H1 (cell line): ENCODE measurements at regions of chr19 and their contacts with region 1.

Region 1: DNA sequence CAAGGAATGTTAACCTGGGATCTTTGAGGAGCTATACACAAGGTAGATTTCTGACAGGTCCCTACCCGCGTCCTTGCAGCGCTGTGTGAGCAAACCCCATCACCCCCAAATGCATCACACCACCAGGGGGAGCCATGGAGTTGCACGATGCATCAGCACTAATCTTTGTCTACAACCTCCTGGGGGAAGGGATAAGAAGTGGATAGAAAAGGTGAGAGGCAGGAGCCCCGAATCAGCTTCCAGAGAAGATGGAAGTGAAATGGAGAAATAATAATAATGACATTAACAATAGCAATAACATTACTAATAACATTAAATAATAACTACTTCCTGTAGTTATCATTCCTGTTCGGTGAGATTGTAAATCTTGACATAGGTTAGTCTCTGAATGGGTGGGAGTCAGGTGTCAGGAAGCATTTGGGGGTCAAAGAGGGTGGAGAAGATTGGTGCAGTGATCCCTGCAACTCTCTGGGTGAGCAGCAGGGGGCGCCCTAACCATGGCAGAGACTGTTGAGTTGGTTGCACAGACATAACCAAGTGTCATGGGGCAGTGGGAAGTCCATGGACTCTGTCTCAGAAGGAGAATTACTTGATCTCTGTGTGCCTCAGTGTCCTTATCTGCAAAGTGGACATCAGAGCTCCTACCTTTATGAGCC is 16.5 kb downstream of the SIGLEC7 start:
- DNase-seq: peak; percentile 56 to 95
- H3K4me3 ChIP-seq: no peak overlapping the region
- H3K27ac ChIP-seq: no peak overlapping the region
- H3K4me1 ChIP-seq: no peaks in the 10 kb centered on the region
- H3K27me3 ChIP-seq: 0 out of 7 replicates have a peak, but pooled peaks cover 0 to 3% (median 0%) of the 10 kb centered on the region in 4 experiments
- CTCF ChIP-seq: peak; percentile 84 to 91 (median 89)
- EP300 ChIP-seq: no peak
- POLR2A ChIP-seq: no peak
- RAD21 ChIP-seq: peak; percentile 87 to 88

Region 2: GRCh38 chr19:51135986-51136762 is 22.4 kb before region 1 on chr19:
- CTCF ChIA-PET with region 1: interaction called, 21 read pairs
- POLR2A ChIA-PET with region 1: no interaction called
- DNase-seq: no peak
- H3K4me3 ChIP-seq: no peak overlapping the region
- H3K27ac ChIP-seq: no peak overlapping the region
- H3K4me1 ChIP-seq: peaks cover 4 to 6% (median 5%) of the 10 kb centered on the region in 4 experiments; a peak in 5 of 7 replicates
- H3K27me3 ChIP-seq: no peaks in the 10 kb centered on the region
- CTCF ChIP-seq: no peak
- EP300 ChIP-seq: no peak
- POLR2A ChIP-seq: no peak
- RAD21 ChIP-seq: no peak

Region 3: GRCh38 chr19:51147663-51148062 is 10.9 kb before region 1 on chr19:
- CTCF ChIA-PET with region 1: interaction called, 62 read pairs
- POLR2A ChIA-PET with region 1: no interaction called
- DNase-seq: no peak
- H3K4me3 ChIP-seq: no peak overlapping the region
- H3K27ac ChIP-seq: no peak overlapping the region
- H3K4me1 ChIP-seq: no peaks in the 10 kb centered on the region; a peak in 1 of 7 replicates
- H3K27me3 ChIP-seq: no peaks in the 10 kb centered on the region
- CTCF ChIP-seq: no peak
- EP300 ChIP-seq: no peak
- POLR2A ChIP-seq: no peak
- RAD21 ChIP-seq: no peak

Region 4: GRCh38 chr19:51179256-51179655 is 20.7 kb after region 1 on chr19:
- CTCF ChIA-PET with region 1: interaction called, 33 read pairs
- POLR2A ChIA-PET with region 1: no interaction called
- DNase-seq: no peak
- H3K4me3 ChIP-seq: no peak overlapping the region
- H3K27ac ChIP-seq: no peak overlapping the region
- H3K4me1 ChIP-seq: peaks cover 0 to 3% (median 0%) of the 10 kb centered on the region in 4 experiments; a peak in 3 of 7 replicates
- H3K27me3 ChIP-seq: peaks cover 0 to 13% (median 5%) of the 10 kb centered on the region in 4 experiments; a peak in 5 of 7 replicates
- CTCF ChIP-seq: no peak
- EP300 ChIP-seq: no peak
- POLR2A ChIP-seq: no peak
- RAD21 ChIP-seq: no peak

Region 5: GRCh38 chr19:51246164-51246552 is 87.6 kb after region 1 on chr19:
- CTCF ChIA-PET with region 1: interaction called, 13 read pairs
- POLR2A ChIA-PET with region 1: no interaction called
- DNase-seq: no peak
- H3K4me3 ChIP-seq: no peak overlapping the region
- H3K27ac ChIP-seq: no peak overlapping the region
- H3K4me1 ChIP-seq: no peaks in the 10 kb centered on the region
- H3K27me3 ChIP-seq: no peaks in the 10 kb centered on the region
- CTCF ChIP-seq: no peak
- EP300 ChIP-seq: no peak
- POLR2A ChIP-seq: no peak
- RAD21 ChIP-seq: no peak